ENCODE measurements at regions of chr1 and their contacts with region 1.

Region 1: DNA sequence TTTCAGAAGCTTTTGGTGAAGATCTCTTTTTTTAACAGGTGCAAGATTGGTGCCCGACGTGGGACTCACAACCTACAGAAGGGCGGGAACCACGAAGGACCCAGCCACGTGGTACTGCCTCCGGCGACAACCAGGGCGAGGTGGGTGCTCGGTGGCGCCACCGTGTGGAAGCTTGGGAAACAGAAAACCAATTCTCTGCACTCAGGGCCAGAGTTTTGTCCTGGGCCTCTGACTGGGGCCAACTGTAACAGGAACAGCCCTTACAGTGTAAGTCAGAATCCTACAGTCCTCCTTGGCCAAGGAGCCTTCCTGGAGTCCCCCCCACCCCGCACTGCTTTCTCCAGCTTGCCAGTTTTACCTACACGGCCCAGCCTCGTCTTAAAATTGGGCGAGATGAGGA is 11.6 kb upstream of the S100A7A start:
- DNase-seq: peak; percentile 38 to 56 (median 51)
- H3K4me3 ChIP-seq: no peak overlapping the region
- H3K4me3 Mint-ChIP-seq: no peak overlapping the region
- H3K27ac ChIP-seq: no peak overlapping the region
- H3K27ac Mint-ChIP-seq: no peak overlapping the region
- H3K4me1 ChIP-seq: peaks cover 13% of the 10 kb centered on the region
- H3K4me1 Mint-ChIP-seq: peaks cover 10 to 27% (median 14%) of the 10 kb centered on the region in 4 donors
- H3K27me3 ChIP-seq: no peaks in the 10 kb centered on the region
- H3K27me3 Mint-ChIP-seq: peaks cover 10 to 16% of the 10 kb centered on the region in 2 donors

Region 2: GRCh38 chr1:153312570-153313193 is 92.1 kb before region 1 on chr1 and contains the start of gene PGLYRP3:
- CTCF ChIA-PET with region 1: no interaction called
- POLR2A ChIA-PET with region 1: no interaction called
- intact Hi-C with region 1: no loop called
- DNase-seq: no peak
- H3K4me3 ChIP-seq: no peak within 1 kb of the TSS
- H3K4me3 Mint-ChIP-seq: no peak within 1 kb of the TSS
- H3K27ac ChIP-seq: no peak within 1 kb of the TSS
- H3K27ac Mint-ChIP-seq: no peak within 1 kb of the TSS
- H3K4me1 ChIP-seq: no peaks in the 10 kb centered on the region
- H3K4me1 Mint-ChIP-seq: no peaks in the 10 kb centered on the region
- H3K27me3 ChIP-seq: no peaks in the 10 kb centered on the region
- H3K27me3 Mint-ChIP-seq: peaks cover 6 to 9% of the 10 kb centered on the region in 2 donors
- total RNA-seq, gene PGLYRP3: not detected

Region 3: DNA sequence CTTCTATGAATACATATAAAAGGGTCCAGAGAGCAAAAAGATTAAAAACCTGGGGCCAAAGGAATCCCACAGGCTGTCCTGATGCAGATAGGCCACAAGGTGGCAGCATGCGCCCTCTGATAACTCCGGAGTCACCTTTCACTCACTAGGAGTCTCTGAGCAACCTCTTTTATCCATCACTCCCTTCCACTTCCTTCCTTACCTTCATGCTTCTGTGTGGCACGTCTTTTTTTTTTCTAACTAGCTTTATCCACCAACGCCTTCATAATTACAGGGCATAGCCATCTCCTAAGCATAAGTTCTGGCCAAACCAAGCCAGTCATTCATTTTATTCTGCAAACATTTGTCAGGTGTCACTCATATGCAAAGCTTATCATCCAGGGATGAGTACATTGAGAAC is 52.2 kb before region 1 on chr1:
- CTCF ChIA-PET with region 1: interaction called, 23 read pairs
- POLR2A ChIA-PET with region 1: no interaction called
- intact Hi-C with region 1: loop called (anchors 2 kb)
- DNase-seq: peak in 4 of 5 donors; percentile 48 to 63 (median 56)
- H3K4me3 ChIP-seq: no peak overlapping the region
- H3K4me3 Mint-ChIP-seq: no peak overlapping the region
- H3K27ac ChIP-seq: no peak overlapping the region
- H3K27ac Mint-ChIP-seq: no peak overlapping the region
- H3K4me1 ChIP-seq: peaks cover 8% of the 10 kb centered on the region
- H3K4me1 Mint-ChIP-seq: peaks cover 4 to 20% (median 11%) of the 10 kb centered on the region in 4 donors
- H3K27me3 ChIP-seq: no peaks in the 10 kb centered on the region
- H3K27me3 Mint-ChIP-seq: peaks cover 6 to 13% of the 10 kb centered on the region in 2 donors

Measured in CD4-positive, alpha-beta memory T cell (primary cell).